Activated CD8-positive, alpha-beta T cell treated with anti-CD3 and anti-CD28 coated beads, Interleukin-2, amount 10 ng/mL, durations not matched to agents 7 days and 5 days (primary cell): ENCODE measurements at regions of chr7 and their contacts with region 1.

Region 1: DNA sequence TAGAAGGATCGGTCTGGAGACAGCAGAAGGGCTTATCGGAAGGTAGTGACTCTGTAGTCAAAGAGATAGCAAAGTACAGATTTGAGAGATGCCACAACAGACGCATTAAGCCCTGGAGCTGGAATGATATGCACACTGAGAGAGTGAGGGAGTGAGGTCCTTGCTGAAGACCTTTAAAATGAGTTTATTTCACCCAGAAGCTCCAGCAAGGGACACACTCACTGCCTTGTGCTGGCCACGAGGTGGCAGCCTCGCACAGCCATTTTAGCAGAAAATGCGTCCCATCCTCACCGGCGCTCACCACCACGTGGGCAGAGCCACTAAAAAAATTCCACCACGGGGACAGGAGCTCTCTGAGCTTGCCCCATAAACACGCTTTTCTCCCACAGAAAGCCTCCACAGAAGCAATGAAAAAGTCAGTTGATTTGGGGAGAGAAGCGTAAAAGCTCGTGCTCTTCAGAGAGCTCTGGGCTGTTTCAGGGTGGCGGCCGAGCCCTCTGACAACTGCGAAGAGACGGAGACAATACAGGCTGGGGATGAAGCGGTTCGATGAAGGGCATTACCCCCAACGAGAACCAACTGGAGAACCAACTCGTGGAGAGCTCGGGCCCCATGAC is 163.0 kb upstream of the KLF14 start:
- DNase-seq: peak; percentile 79
- ATAC-seq: peak; percentile 80
- H3K4me3 Mint-ChIP-seq: no peak overlapping the region
- H3K27ac Mint-ChIP-seq: peak overlapping the region; percentile 68
- H3K4me1 Mint-ChIP-seq: peaks cover 73% of the 10 kb centered on the region
- H3K27me3 Mint-ChIP-seq: no peaks in the 10 kb centered on the region

Region 2: GRCh38 chr7:130929896-130930659 is 33.1 kb after region 1 on chr7:
- CTCF ChIA-PET with region 1: interaction called, 24 read pairs
- POLR2A ChIA-PET with region 1: interaction called, 3 read pairs
- DNase-seq: no peak
- ATAC-seq: no peak
- H3K4me3 Mint-ChIP-seq: no peak overlapping the region
- H3K27ac Mint-ChIP-seq: peak overlapping the region; percentile 40
- H3K4me1 Mint-ChIP-seq: peaks cover 61% of the 10 kb centered on the region
- H3K27me3 Mint-ChIP-seq: no peaks in the 10 kb centered on the region

Region 3: GRCh38 chr7:130961128-130961601 is 64.2 kb after region 1 on chr7:
- CTCF ChIA-PET with region 1: interaction called, 60 read pairs
- POLR2A ChIA-PET with region 1: interaction called, 6 read pairs
- DNase-seq: peak; percentile 90
- ATAC-seq: peak; percentile 88
- H3K4me3 Mint-ChIP-seq: peak overlapping the region; percentile 91
- H3K27ac Mint-ChIP-seq: peak overlapping the region; percentile 99
- H3K4me1 Mint-ChIP-seq: peaks cover 48% of the 10 kb centered on the region
- H3K27me3 Mint-ChIP-seq: no peaks in the 10 kb centered on the region

Region 4: DNA sequence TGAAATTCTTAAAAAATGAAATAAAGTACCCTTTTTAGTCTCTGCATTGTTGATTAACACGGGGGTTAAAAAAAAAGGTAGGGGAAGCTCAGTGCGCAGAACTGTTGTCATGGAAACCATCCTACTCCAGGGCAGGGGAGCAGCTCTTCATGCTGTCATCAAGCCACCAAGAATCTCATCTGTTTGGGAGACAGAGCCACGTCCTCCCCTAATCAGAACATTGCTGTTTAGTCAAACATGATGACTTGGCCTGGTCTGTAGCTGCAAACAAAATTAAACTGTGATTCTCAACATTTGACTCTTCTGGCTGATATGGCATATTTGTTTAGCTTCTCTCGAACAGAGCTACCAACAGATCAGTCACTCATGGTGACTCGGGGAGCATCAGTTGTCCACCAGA is 91.4 kb after region 1 on chr7:
- CTCF ChIA-PET with region 1: interaction called, 75 read pairs
- POLR2A ChIA-PET with region 1: no interaction called
- DNase-seq: no peak
- ATAC-seq: peak; percentile 43
- H3K4me3 Mint-ChIP-seq: no peak overlapping the region
- H3K27ac Mint-ChIP-seq: peak overlapping the region; percentile 28
- H3K4me1 Mint-ChIP-seq: peaks cover 51% of the 10 kb centered on the region
- H3K27me3 Mint-ChIP-seq: no peaks in the 10 kb centered on the region

Region 5: DNA sequence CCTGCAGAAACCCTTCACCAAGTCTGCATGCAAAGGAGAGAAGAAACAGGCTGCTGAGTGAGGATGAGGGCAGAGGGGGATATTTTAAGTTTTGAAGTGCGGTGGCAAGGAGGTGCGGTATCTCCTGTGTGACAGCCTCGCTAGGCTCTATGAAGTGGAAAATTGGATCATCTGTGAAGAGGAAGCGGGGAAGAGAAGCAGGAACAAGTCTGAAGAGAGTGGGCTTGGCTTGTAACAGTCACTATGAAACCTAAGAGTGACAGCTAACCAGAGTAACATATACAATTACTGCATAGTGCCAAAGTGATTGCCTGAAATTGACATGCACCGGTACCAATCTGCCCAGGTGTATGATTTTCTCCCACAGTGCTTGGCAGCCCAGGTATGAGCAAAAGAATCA is 124.5 kb after region 1 on chr7:
- CTCF ChIA-PET with region 1: interaction called, 11 read pairs
- POLR2A ChIA-PET with region 1: no interaction called
- DNase-seq: no peak
- ATAC-seq: peak; percentile 46
- H3K4me3 Mint-ChIP-seq: peak overlapping the region; percentile 1
- H3K27ac Mint-ChIP-seq: peak overlapping the region; percentile 66
- H3K4me1 Mint-ChIP-seq: peaks cover 30% of the 10 kb centered on the region
- H3K27me3 Mint-ChIP-seq: no peaks in the 10 kb centered on the region

Region 6: DNA sequence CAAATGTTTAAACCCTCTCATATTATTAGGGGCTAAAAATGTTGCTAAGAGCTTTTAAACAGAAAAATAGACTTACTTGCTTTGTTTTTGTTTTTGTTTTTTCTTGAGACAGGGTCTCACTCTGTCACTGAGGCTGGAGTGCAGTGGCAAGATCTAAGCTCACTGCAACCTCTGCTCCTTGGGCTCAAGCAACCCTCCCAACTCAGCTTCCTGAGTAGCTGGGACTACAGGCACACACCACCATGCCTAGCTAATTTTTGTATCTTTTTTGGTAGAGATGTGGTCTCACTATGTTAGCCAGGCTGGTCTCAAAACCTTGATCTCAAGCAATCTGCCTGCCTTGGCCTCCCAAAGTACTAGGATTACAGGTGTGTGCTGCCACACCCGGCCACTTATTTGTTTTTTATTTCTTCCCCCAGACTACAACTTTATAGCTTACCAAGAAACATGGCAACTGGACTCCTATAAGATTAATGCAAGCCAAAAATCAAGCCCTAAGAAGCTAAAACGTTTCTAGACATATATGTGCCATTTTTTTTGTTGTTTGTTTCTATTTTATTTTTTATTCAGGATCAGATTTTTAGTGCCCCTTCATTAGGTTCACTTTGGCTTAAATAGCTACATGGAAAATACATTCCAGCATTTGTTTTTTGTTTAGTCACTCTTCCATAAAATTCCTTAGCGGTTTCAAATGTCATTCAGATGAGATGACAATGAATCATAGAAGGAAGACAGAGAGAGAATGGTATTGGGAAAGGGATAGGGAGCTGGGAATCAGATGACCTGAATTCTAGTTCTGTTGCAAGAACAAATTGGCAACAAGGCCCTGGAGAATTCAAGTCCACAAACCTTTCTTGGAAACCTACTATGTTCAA is 267.3 kb after region 1 on chr7:
- CTCF ChIA-PET with region 1: no interaction called
- POLR2A ChIA-PET with region 1: no interaction called
- DNase-seq: no peak
- ATAC-seq: no peak
- H3K4me3 Mint-ChIP-seq: no peak overlapping the region
- H3K27ac Mint-ChIP-seq: no peak overlapping the region
- H3K4me1 Mint-ChIP-seq: no peaks in the 10 kb centered on the region
- H3K27me3 Mint-ChIP-seq: peaks cover 4% of the 10 kb centered on the region